ENCODE measurements at regions of chr9 and their contacts with region 1.

Region 1: GRCh38 chr9:99184475-99185347 is 37.0 kb downstream of the ALG2 start:
- DNase-seq: peak; percentile 80
- ATAC-seq: peak; percentile 79
- H3K4me3 ChIP-seq: no peak overlapping the region
- H3K27ac ChIP-seq: peak overlapping the region; percentile 49
- H3K4me1 ChIP-seq: peaks cover 66% of the 10 kb centered on the region
- H3K27me3 ChIP-seq: no peaks in the 10 kb centered on the region
- CTCF ChIP-seq: peak; percentile 90 to 98 (median 94)
- EP300 ChIP-seq: no peak; a peak in 1 of 4 replicates
- POLR2A ChIP-seq: 0 out of 2 replicates have a peak, but pooled peaks have one; percentile 18
- RAD21 ChIP-seq: peak; percentile 93

Region 2: GRCh38 chr9:99085949-99086948 is 98.5 kb before region 1 on chr9:
- CTCF ChIA-PET with region 1: no interaction called
- POLR2A ChIA-PET with region 1: no interaction called
- RAD21 ChIA-PET with region 1: no interaction called
- SMC1A ChIA-PET with region 1: no interaction called
- in situ Hi-C with region 1: no loop called
- intact Hi-C with region 1: no loop called
- DNase-seq: no peak
- ATAC-seq: no peak
- H3K4me3 ChIP-seq: no peak overlapping the region
- H3K27ac ChIP-seq: no peak overlapping the region
- H3K4me1 ChIP-seq: no peaks in the 10 kb centered on the region
- H3K27me3 ChIP-seq: peaks cover 0 to 1% of the 10 kb centered on the region in 2 experiments; a peak in 1 of 4 replicates
- CTCF ChIP-seq: no peak
- EP300 ChIP-seq: no peak
- POLR2A ChIP-seq: no peak
- RAD21 ChIP-seq: no peak

Region 3: GRCh38 chr9:99162759-99163364 is 21.8 kb before region 1 on chr9:
- CTCF ChIA-PET with region 1: interaction called, 131 read pairs
- POLR2A ChIA-PET with region 1: interaction called, 9 read pairs
- RAD21 ChIA-PET with region 1: interaction called, 147 read pairs
- SMC1A ChIA-PET with region 1: interaction called, 150 read pairs
- in situ Hi-C with region 1: no loop called
- intact Hi-C with region 1: loop called (anchors 1 kb)
- DNase-seq: no peak
- ATAC-seq: peak; percentile 72
- H3K4me3 ChIP-seq: no peak overlapping the region
- H3K27ac ChIP-seq: no peak overlapping the region
- H3K4me1 ChIP-seq: peaks cover 12% of the 10 kb centered on the region
- H3K27me3 ChIP-seq: no peaks in the 10 kb centered on the region
- CTCF ChIP-seq: peak; percentile 49 to 81 (median 65); a peak in 5 of 6 replicates
- EP300 ChIP-seq: no peak
- POLR2A ChIP-seq: no peak
- RAD21 ChIP-seq: peak; percentile 94

Region 4: GRCh38 chr9:99221621-99222415 is 37.1 kb after region 1 on chr9 and contains the starts of genes ALG2 and SEC61B:
- CTCF ChIA-PET with region 1: interaction called, 45 read pairs
- POLR2A ChIA-PET with region 1: interaction called, 31 read pairs
- RAD21 ChIA-PET with region 1: interaction called, 121 read pairs
- SMC1A ChIA-PET with region 1: interaction called, 189 read pairs
- in situ Hi-C with region 1: no loop called
- intact Hi-C with region 1: loop called (anchors 1 kb)
- DNase-seq: peak; percentile 94
- ATAC-seq: peak; percentile 91
- H3K4me3 ChIP-seq: peak within 1 kb of the TSS; percentile 97
- H3K27ac ChIP-seq: peak within 1 kb of the TSS; percentile 99
- H3K4me1 ChIP-seq: peaks cover 9% of the 10 kb centered on the region
- H3K27me3 ChIP-seq: no peaks in the 10 kb centered on the region
- CTCF ChIP-seq: no peak
- EP300 ChIP-seq: peak in 1 of 2 experiments; percentile 51; a peak in 1 of 4 replicates
- POLR2A ChIP-seq: peak; percentile 97
- RAD21 ChIP-seq: no peak
- polyA plus RNA-seq, gene ALG2: 8.8 to 17.8 TPM
- polyA plus RNA-seq, gene SEC61B: 108 to 229 TPM

Region 5: GRCh38 chr9:99266255-99267023 is 81.7 kb after region 1 on chr9:
- CTCF ChIA-PET with region 1: interaction called, 69 read pairs
- POLR2A ChIA-PET with region 1: interaction called, 4 read pairs
- RAD21 ChIA-PET with region 1: interaction called, 12 read pairs
- SMC1A ChIA-PET with region 1: interaction called, 29 read pairs
- in situ Hi-C with region 1: no loop called
- intact Hi-C with region 1: loop called (anchors 1 kb)
- DNase-seq: peak; percentile 48
- ATAC-seq: peak; percentile 82
- H3K4me3 ChIP-seq: no peak overlapping the region
- H3K27ac ChIP-seq: peak overlapping the region; percentile 57; the same call in 1 of the 2 replicates
- H3K4me1 ChIP-seq: peaks cover 40% of the 10 kb centered on the region
- H3K27me3 ChIP-seq: no peaks in the 10 kb centered on the region
- CTCF ChIP-seq: peak; percentile 90 to 97 (median 93); a peak in 5 of 6 replicates
- EP300 ChIP-seq: no peak
- POLR2A ChIP-seq: no peak
- RAD21 ChIP-seq: peak; percentile 92

Region 6: GRCh38 chr9:99660191-99660708 is 475.5 kb after region 1 on chr9:
- CTCF ChIA-PET with region 1: no interaction called
- POLR2A ChIA-PET with region 1: no interaction called
- RAD21 ChIA-PET with region 1: no interaction called
- SMC1A ChIA-PET with region 1: no interaction called
- in situ Hi-C with region 1: no loop called
- intact Hi-C with region 1: loop called (anchors 10 kb)
- DNase-seq: peak; percentile 78
- ATAC-seq: peak; percentile 97
- H3K4me3 ChIP-seq: no peak overlapping the region
- H3K27ac ChIP-seq: no peak overlapping the region
- H3K4me1 ChIP-seq: peaks cover 14% of the 10 kb centered on the region
- H3K27me3 ChIP-seq: no peaks in the 10 kb centered on the region
- CTCF ChIP-seq: no peak
- EP300 ChIP-seq: peak; percentile 98 to 99; a peak in 3 of 4 replicates
- POLR2A ChIP-seq: 0 out of 2 replicates have a peak, but pooled peaks have one; percentile 21
- RAD21 ChIP-seq: no peak

Region 7: DNA sequence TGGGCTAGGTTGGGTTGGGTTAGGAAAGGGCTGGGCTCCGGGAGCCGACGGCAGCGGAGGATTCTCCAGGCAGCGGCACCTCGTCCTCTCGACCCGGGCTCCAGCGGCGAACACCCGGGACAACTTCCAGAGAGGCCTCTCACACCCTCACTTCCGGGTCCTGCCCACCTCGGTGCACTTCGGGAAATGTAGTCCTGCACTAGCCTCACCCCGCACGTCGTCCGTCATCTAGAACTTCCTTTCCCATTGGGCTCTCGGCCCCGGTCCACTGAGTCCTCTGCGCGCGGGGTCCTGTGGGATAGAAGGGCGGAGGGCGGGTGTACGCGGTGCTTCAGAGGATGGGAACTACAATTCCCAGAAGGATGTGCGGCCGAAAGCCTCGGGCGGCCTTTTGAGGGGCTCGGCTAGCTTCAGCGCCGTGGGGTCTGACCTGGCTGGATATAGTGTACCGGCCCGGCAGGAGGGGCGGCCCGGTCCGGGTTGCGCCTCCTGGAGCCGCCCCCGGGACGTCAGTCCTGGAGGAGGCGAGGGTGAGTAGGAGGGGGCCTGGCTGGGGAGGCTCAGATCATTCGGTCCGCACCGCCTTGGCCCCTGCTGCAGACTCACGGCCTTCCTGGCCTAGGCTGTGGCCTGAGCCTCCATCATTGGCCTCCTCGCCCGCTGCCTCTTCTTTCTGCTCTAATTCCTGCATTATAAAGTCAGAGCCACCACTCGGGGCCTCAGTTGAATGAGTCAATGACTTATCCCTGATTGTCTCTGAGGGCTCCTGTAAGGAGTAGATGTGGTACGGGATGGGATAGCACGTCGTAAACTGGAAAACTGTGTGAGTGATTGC is 914.4 kb after region 1 on chr9 and contains the starts of genes ERP44 and INVS:
- CTCF ChIA-PET with region 1: no interaction called
- POLR2A ChIA-PET with region 1: no interaction called
- RAD21 ChIA-PET with region 1: no interaction called
- SMC1A ChIA-PET with region 1: no interaction called
- in situ Hi-C with region 1: no loop called
- intact Hi-C with region 1: loop called (anchors 10 kb)
- DNase-seq: peak; percentile 97
- ATAC-seq: peak; percentile 98
- H3K4me3 ChIP-seq: peak within 1 kb of the TSS; percentile 99
- H3K27ac ChIP-seq: peak within 1 kb of the TSS; percentile 92
- H3K4me1 ChIP-seq: no peaks in the 10 kb centered on the region
- H3K27me3 ChIP-seq: no peaks in the 10 kb centered on the region
- CTCF ChIP-seq: no peak
- EP300 ChIP-seq: no peak
- POLR2A ChIP-seq: peak; percentile 96
- RAD21 ChIP-seq: 0 out of 2 replicates have a peak, but pooled peaks have one; percentile 1
- polyA plus RNA-seq, gene ERP44: 13.5 to 14.4 TPM
- polyA plus RNA-seq, gene INVS: 0.93 to 1.0 TPM

Region 8: GRCh38 chr9:100437860-100438805 is 1253.4 kb after region 1 on chr9:
- CTCF ChIA-PET with region 1: interaction called, 3 read pairs
- POLR2A ChIA-PET with region 1: no interaction called
- RAD21 ChIA-PET with region 1: no interaction called
- SMC1A ChIA-PET with region 1: no interaction called
- in situ Hi-C with region 1: no loop called
- intact Hi-C with region 1: loop called (anchors 10 kb)
- DNase-seq: no peak
- ATAC-seq: peak; percentile 83
- H3K4me3 ChIP-seq: no peak overlapping the region
- H3K27ac ChIP-seq: no peak overlapping the region
- H3K4me1 ChIP-seq: no peaks in the 10 kb centered on the region
- H3K27me3 ChIP-seq: no peaks in the 10 kb centered on the region
- CTCF ChIP-seq: peak; percentile 88 to 92 (median 91)
- EP300 ChIP-seq: no peak
- POLR2A ChIP-seq: no peak
- RAD21 ChIP-seq: peak; percentile 61

Measured in GM12878 (cell line).